ENCODE measurements at regions of chr11 and their contacts with region 1.

Region 1: GRCh38 chr11:30653606-30654005 is 67.5 kb upstream of the MPPED2 start:
- DNase-seq: no peak
- ATAC-seq: no peak
- H3K4me3 Mint-ChIP-seq: no peak overlapping the region
- H3K27ac Mint-ChIP-seq: no peak overlapping the region
- H3K4me1 Mint-ChIP-seq: no peaks in the 10 kb centered on the region
- H3K27me3 Mint-ChIP-seq: no peaks in the 10 kb centered on the region
- CTCF ChIP-seq: no peak

Region 2: GRCh38 chr11:30346068-30346688 is 307.4 kb before region 1 on chr11:
- CTCF ChIA-PET with region 1: no interaction called
- POLR2A ChIA-PET with region 1: no interaction called
- intact Hi-C with region 1: loop called (anchors 5 kb)
- DNase-seq: no peak
- ATAC-seq: peak; percentile 66
- H3K4me3 Mint-ChIP-seq: no peak overlapping the region
- H3K27ac Mint-ChIP-seq: no peak overlapping the region
- H3K4me1 Mint-ChIP-seq: peaks cover 15% of the 10 kb centered on the region
- H3K27me3 Mint-ChIP-seq: no peaks in the 10 kb centered on the region
- CTCF ChIP-seq: peak; percentile 67

Region 3: DNA sequence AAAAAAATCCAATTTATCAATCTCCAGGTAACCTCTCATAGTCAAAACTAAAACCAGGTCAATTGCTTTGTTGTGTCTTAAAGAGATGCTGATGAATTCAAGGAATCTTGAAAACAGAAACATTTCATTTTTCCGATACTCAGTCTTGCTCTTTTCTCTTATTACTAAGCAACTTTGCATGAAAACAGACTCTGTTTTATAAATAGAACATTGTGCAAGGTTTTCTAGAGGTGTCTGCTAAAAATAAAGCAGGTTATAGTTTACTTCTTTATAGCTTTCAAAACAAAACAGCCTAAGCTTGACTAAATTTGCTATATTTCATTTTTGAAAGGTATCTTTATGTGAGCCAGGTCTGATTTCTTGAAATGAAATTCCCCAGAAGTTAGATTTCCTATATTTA is 221.4 kb before region 1 on chr11:
- CTCF ChIA-PET with region 1: no interaction called
- POLR2A ChIA-PET with region 1: no interaction called
- intact Hi-C with region 1: no loop called
- DNase-seq: no peak
- ATAC-seq: no peak
- H3K4me3 Mint-ChIP-seq: no peak overlapping the region
- H3K27ac Mint-ChIP-seq: no peak overlapping the region
- H3K4me1 Mint-ChIP-seq: no peaks in the 10 kb centered on the region
- H3K27me3 Mint-ChIP-seq: peaks cover 3% of the 10 kb centered on the region
- CTCF ChIP-seq: no peak